ENCODE measurements at regions of chrX and their contacts with region 1.

Region 1: DNA sequence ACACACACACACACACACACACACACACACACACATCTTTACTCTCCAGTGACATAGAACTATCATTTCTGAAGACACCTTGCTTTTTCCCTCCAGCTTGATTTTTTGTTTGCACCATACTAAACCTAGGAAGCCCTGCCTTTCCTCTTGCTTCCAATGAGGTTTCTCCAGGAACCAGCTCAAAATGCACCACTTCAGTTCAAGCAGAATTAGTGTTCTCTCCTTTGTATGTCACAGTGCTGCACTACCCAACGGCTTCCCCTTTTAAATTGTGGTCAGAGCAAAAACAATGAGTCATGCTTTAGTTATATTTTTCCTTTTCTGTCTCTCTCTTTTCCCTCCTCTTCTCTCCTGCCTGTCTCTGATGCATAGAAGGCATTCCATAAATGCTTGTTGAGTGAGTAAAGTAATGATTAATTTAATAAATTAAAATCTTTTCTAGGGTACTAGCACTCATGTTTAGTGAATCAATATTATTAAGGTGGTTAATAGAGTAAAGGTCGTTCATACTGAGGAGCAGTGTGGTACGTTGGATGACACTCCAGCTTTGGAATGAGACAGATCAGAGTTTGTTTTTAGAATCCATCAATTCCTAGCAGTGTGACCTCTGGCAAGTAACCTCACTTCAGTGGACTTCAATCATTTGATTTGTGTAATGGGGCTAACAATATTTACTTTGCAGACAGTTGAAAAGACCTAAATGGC is 5.9 kb downstream of the RTL3 start:
- DNase-seq: peak; percentile 88
- ATAC-seq: peak; percentile 88
- H3K4me3 ChIP-seq: peak overlapping the region; percentile 12; the same call in 1 of the 2 replicates
- H3K27ac ChIP-seq: peak overlapping the region; percentile 55
- H3K4me1 ChIP-seq: peaks cover 36% of the 10 kb centered on the region
- H3K27me3 ChIP-seq: no peaks in the 10 kb centered on the region
- CTCF ChIP-seq: no peak

Region 2: GRCh38 chrX:78366576-78366975 is 286.7 kb before region 1 on chrX:
- CTCF ChIA-PET with region 1: no interaction called
- POLR2A ChIA-PET with region 1: no interaction called
- intact Hi-C with region 1: loop called (anchors 10 kb)
- DNase-seq: peak; percentile 71
- ATAC-seq: peak; percentile 92
- H3K4me3 ChIP-seq: no peak overlapping the region
- H3K27ac ChIP-seq: peak overlapping the region; percentile 82
- H3K4me1 ChIP-seq: peaks cover 26% of the 10 kb centered on the region
- H3K27me3 ChIP-seq: no peaks in the 10 kb centered on the region
- CTCF ChIP-seq: no peak

Region 3: GRCh38 chrX:78614264-78614663 is 39.0 kb before region 1 on chrX:
- CTCF ChIA-PET with region 1: no interaction called
- POLR2A ChIA-PET with region 1: no interaction called
- intact Hi-C with region 1: loop called (anchors 1 kb)
- DNase-seq: peak; percentile 51
- ATAC-seq: peak; percentile 87
- H3K4me3 ChIP-seq: no peak overlapping the region
- H3K27ac ChIP-seq: no peak overlapping the region
- H3K4me1 ChIP-seq: 0 out of 2 replicates have a peak, but pooled peaks cover 4% of the 10 kb centered on the region
- H3K27me3 ChIP-seq: no peaks in the 10 kb centered on the region
- CTCF ChIP-seq: no peak

Region 4: GRCh38 chrX:78708262-78708661 is 55.0 kb after region 1 on chrX:
- CTCF ChIA-PET with region 1: no interaction called
- POLR2A ChIA-PET with region 1: no interaction called
- intact Hi-C with region 1: loop called (anchors 5 kb)
- DNase-seq: peak; percentile 63
- ATAC-seq: peak; percentile 76
- H3K4me3 ChIP-seq: no peak overlapping the region
- H3K27ac ChIP-seq: no peak overlapping the region
- H3K4me1 ChIP-seq: no peaks in the 10 kb centered on the region
- H3K27me3 ChIP-seq: no peaks in the 10 kb centered on the region
- CTCF ChIP-seq: peak; percentile 70

Region 5: GRCh38 chrX:78979789-78980464 is 326.7 kb after region 1 on chrX:
- CTCF ChIA-PET with region 1: no interaction called
- POLR2A ChIA-PET with region 1: no interaction called
- intact Hi-C with region 1: no loop called
- DNase-seq: peak; percentile 28
- ATAC-seq: no peak
- H3K4me3 ChIP-seq: no peak overlapping the region
- H3K27ac ChIP-seq: no peak overlapping the region
- H3K4me1 ChIP-seq: no peaks in the 10 kb centered on the region
- H3K27me3 ChIP-seq: no peaks in the 10 kb centered on the region
- CTCF ChIP-seq: no peak

Region 6: DNA sequence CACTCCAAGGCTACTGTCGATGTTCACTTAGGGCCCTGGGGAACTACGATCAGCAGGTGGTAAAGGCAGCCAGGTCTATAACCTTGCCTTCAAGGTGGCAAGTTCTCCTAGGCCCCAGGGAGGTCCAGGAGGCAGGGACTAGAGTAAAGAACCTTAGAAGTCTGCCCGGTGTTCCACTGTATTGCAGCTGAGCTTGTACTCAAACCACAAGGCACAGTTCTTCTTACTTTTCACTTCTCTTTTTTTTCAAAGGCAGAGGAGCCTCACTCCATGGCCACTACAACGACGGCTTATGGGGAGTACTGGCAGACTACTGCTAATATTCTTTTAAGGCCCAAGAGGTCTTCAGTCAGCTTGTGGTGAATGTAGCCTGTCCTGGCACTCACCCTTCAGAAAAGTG is 412.4 kb after region 1 on chrX:
- CTCF ChIA-PET with region 1: no interaction called
- POLR2A ChIA-PET with region 1: no interaction called
- intact Hi-C with region 1: no loop called
- DNase-seq: no peak
- ATAC-seq: no peak
- H3K4me3 ChIP-seq: no peak overlapping the region
- H3K27ac ChIP-seq: no peak overlapping the region
- H3K4me1 ChIP-seq: no peaks in the 10 kb centered on the region
- H3K27me3 ChIP-seq: no peaks in the 10 kb centered on the region
- CTCF ChIP-seq: no peak